Sigmoid colon (tissue), 7 donors: ENCODE measurements at regions of chr2 and their contacts with region 1.

Region 1: GRCh38 chr2:197378494-197379307 is 56.1 kb downstream of the SF3B1 start:
- DNase-seq: no peak
- H3K4me3 ChIP-seq: no peak overlapping the region
- H3K27ac ChIP-seq: no peak overlapping the region
- H3K4me1 ChIP-seq: peaks cover 0 to 8% (median 3%) of the 10 kb centered on the region in 4 donors
- H3K27me3 ChIP-seq: no peaks in the 10 kb centered on the region
- CTCF ChIP-seq: peak; percentile 54 to 71 (median 62)
- EP300 ChIP-seq: no peak
- POLR2A ChIP-seq: no peak

Region 2: GRCh38 chr2:197011799-197012641 is 366.7 kb before region 1 on chr2:
- intact Hi-C with region 1: loop called (anchors 2 kb)
- DNase-seq: no peak
- H3K4me3 ChIP-seq: no peak overlapping the region
- H3K27ac ChIP-seq: no peak overlapping the region
- H3K4me1 ChIP-seq: no peaks in the 10 kb centered on the region
- H3K27me3 ChIP-seq: no peaks in the 10 kb centered on the region
- CTCF ChIP-seq: peak; percentile 23 to 71 (median 66)
- EP300 ChIP-seq: no peak
- POLR2A ChIP-seq: no peak

Region 3: DNA sequence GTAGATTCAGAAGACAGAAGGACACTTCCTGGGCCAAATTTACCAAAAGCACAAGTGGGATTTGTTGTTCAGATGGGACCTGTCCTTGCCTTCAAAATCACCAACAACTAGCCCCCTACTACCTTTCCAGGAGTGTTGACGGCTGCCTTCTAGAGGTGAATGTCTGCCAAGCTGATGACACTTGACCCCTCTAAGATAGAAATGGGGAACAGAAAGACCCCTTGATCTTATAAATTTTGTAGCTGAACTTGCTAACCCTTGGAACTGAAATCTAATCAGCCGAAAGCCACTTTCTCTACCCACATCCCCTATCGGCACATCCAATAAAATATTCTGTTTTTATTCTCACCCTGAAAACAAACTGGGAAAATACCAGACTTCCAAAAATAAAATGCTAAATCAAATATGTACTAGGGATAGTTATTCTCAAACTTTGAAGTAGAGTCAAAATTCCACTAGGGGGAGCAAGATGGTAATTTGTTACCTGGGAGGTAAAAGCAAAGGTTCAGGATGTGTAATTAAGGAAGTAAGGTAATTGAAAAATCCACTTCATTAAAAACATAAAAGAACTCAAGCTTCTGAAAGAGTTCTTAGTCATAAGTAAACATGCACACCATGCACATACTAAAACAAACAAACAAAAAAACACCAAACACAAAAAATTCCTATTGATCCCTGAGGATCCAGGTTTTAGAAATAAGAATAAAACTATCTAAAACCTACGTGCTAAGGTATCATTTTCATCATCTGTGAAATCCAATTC is 187.3 kb before region 1 on chr2:
- intact Hi-C with region 1: loop called (anchors 2 kb)
- DNase-seq: no peak
- H3K4me3 ChIP-seq: no peak overlapping the region
- H3K27ac ChIP-seq: no peak overlapping the region
- H3K4me1 ChIP-seq: peaks cover 0 to 51% (median 20%) of the 10 kb centered on the region in 4 donors
- H3K27me3 ChIP-seq: no peaks in the 10 kb centered on the region
- CTCF ChIP-seq: peak; percentile 15 to 80 (median 62)
- EP300 ChIP-seq: no peak
- POLR2A ChIP-seq: no peak

Region 4: GRCh38 chr2:197538412-197538811 is 159.7 kb after region 1 on chr2:
- intact Hi-C with region 1: no loop called
- DNase-seq: no peak
- H3K4me3 ChIP-seq: no peak overlapping the region
- H3K27ac ChIP-seq: no peak overlapping the region
- H3K4me1 ChIP-seq: peaks cover 0 to 6% (median 0%) of the 10 kb centered on the region in 4 donors
- H3K27me3 ChIP-seq: no peaks in the 10 kb centered on the region
- CTCF ChIP-seq: no peak
- EP300 ChIP-seq: no peak
- POLR2A ChIP-seq: no peak